Psoas muscle (tissue), 8 donors: ENCODE measurements at regions of chrX and their contacts with region 1.

Region 1: GRCh38 chrX:111445486-111445885 is 33.5 kb upstream of the DCX start:
- DNase-seq: no peak
- ATAC-seq: no peak
- H3K4me3 ChIP-seq: no peak overlapping the region
- H3K27ac ChIP-seq: no peak overlapping the region
- H3K4me1 ChIP-seq: no peaks in the 10 kb centered on the region
- H3K27me3 ChIP-seq: peaks cover 0 to 10% (median 0%) of the 10 kb centered on the region in 3 donors
- CTCF ChIP-seq: peak; percentile 65

Region 2: DNA sequence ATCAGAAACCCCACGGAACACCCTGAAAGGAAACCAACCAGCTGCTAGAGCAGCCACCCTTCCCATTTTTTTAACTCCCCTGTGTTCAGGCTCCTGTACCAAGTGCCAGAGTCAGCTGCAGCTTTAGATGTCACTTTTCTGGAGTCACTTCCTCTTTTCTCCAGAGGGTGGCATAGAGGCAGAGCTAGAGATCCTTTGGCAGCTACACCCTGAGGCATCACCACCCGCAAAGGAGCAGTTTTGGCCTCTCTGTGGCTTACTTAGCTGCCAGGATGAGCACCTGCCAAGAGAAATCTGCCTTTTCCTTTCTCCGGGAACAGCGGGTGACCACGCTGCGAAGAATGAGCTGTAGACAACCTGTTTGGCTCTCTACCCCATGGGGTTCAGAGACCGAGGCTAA is 591.9 kb before region 1 on chrX:
- intact Hi-C with region 1: loop called in 1 of 2 experiments (anchors 10 kb)
- DNase-seq: peak in 1 of 2 donors; percentile 35
- ATAC-seq: peak in 1 of 4 donors; percentile 46
- H3K4me3 ChIP-seq: no peak overlapping the region
- H3K27ac ChIP-seq: no peak overlapping the region
- H3K4me1 ChIP-seq: no peaks in the 10 kb centered on the region
- H3K27me3 ChIP-seq: peaks cover 0 to 15% (median 0%) of the 10 kb centered on the region in 3 donors
- CTCF ChIP-seq: no peak

Region 3: DNA sequence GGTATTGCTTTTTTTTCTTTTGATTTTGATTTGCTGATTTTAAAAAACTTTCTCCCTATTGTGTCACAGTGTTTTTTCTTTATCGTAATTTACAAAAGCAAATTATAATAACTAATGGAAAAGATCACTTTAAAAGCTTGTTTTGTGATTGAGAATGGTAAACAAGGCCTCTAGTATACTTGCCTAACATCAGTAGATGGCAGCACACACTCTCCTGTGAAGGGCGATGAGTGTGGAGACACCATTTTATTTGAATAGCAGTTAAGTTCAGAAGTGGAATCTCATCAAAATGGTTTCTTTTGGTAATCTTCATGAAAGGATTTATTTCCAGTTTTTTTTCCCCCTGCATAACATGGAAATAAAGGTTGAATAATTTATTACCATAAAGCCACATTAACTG is 277.2 kb before region 1 on chrX:
- intact Hi-C with region 1: loop called (anchors 5 to 10 kb)
- DNase-seq: no peak
- ATAC-seq: no peak
- H3K4me3 ChIP-seq: no peak overlapping the region
- H3K27ac ChIP-seq: no peak overlapping the region
- H3K4me1 ChIP-seq: no peaks in the 10 kb centered on the region
- H3K27me3 ChIP-seq: peaks cover 0 to 3% (median 0%) of the 10 kb centered on the region in 3 donors
- CTCF ChIP-seq: no peak